SK-N-SH (cell line): ENCODE measurements at regions of chr3 and their contacts with region 1.

Region 1: DNA sequence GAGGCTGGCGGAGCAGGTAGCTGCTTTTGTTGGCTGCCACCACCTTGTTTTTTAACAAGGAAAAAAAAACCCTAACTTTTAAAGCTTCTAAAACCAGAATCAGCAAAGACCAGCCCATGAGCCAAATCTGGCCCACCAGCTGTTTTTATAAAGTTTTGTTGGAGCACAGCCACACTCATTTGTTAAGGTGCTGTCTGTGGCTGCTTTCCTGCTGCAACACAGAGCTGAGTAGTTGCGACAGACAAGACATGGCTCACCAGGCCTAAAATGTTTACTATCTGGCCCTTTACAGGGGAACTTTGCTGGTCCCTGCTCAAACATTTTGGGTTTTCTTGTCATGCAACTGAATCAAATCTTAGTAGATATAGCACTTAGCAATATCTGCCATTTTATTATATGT is 18.9 kb downstream of the EFCAB12 start:
- DNase-seq: no peak
- H3K4me3 ChIP-seq: no peak overlapping the region
- H3K27ac ChIP-seq: no peak overlapping the region
- H3K4me1 ChIP-seq: peaks cover 0 to 2% of the 10 kb centered on the region in 2 experiments; a peak in 1 of 4 replicates
- H3K27me3 ChIP-seq: no peaks in the 10 kb centered on the region
- CTCF ChIP-seq: no peak
- EP300 ChIP-seq: no peak
- RAD21 ChIP-seq: no peak

Region 2: GRCh38 chr3:129399145-129399894 is 10.2 kb before region 1 on chr3:
- CTCF ChIA-PET with region 1: interaction called, 10 read pairs
- POLR2A ChIA-PET with region 1: no interaction called
- DNase-seq: peak; percentile 87
- H3K4me3 ChIP-seq: peak overlapping the region; percentile 65 to 90
- H3K27ac ChIP-seq: peak overlapping the region; percentile 72 to 86
- H3K4me1 ChIP-seq: peaks cover 5 to 10% of the 10 kb centered on the region in 2 experiments; a peak in 1 of 4 replicates
- H3K27me3 ChIP-seq: no peaks in the 10 kb centered on the region
- CTCF ChIP-seq: peak; percentile 85
- EP300 ChIP-seq: no peak
- RAD21 ChIP-seq: peak; percentile 28; the same call in 1 of the 2 replicates

Region 3: GRCh38 chr3:129435367-129435766 is 25.8 kb after region 1 on chr3:
- CTCF ChIA-PET with region 1: no interaction called
- POLR2A ChIA-PET with region 1: no interaction called
- DNase-seq: no peak
- H3K4me3 ChIP-seq: no peak overlapping the region
- H3K27ac ChIP-seq: no peak overlapping the region
- H3K4me1 ChIP-seq: peaks cover 6% of the 10 kb centered on the region in 2 experiments; a peak in 2 of 4 replicates
- H3K27me3 ChIP-seq: no peaks in the 10 kb centered on the region
- CTCF ChIP-seq: 0 out of 2 replicates have a peak, but pooled peaks have one; percentile 6
- EP300 ChIP-seq: no peak
- RAD21 ChIP-seq: no peak